ENCODE measurements at regions of chr9 and their contacts with region 1.

Region 1: GRCh38 chr9:130186839-130187522 is 14.8 kb downstream of the NCS1 start:
- DNase-seq: peak; percentile 39 to 75
- H3K4me3 ChIP-seq: no peak overlapping the region
- H3K27ac ChIP-seq: no peak overlapping the region
- H3K4me1 ChIP-seq: peaks cover 0 to 44% (median 35%) of the 10 kb centered on the region in 4 experiments; a peak in 6 of 7 replicates
- H3K27me3 ChIP-seq: no peaks in the 10 kb centered on the region
- CTCF ChIP-seq: no peak
- EP300 ChIP-seq: no peak
- POLR2A ChIP-seq: no peak
- RAD21 ChIP-seq: no peak

Region 2: DNA sequence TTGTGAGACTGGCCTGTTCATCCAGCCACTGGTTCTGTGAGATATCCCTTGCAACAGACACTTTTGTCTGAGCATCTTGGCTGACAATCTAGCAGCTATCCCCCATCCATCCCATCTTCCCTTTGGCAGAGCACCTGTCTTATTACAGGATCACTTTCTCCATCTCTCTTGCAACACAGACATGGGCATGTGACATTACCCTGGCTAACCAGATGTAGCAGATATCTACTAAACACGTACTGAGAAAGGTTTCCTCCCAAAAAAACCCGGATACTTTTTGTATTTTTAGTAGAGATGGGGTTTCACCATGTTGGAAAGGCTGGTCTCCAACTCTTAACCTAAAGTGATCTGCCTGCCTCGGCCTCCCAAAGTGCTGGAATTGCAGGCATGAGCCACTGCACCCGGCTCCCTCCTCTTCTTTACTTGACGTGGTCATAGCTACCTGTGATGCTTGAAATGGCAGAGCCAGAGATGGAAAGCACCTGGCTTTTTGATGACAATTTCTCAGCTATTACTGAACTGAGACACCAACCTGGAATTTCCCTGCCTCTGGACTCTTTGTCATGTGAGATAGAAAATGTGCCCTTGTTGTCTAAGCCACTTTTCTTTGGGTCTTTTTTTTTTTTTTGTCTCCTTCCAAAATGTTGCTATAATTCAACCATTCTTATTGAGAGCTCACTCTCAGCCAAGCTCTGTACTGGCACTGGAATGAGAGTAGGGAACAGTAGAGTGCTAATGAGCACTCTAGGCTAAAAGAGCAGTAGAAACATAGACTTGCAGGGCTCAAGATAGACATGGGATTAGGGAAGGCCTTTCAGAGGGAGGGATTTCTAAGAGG is 176.6 kb before region 1 on chr9:
- CTCF ChIA-PET with region 1: no interaction called
- POLR2A ChIA-PET with region 1: no interaction called
- DNase-seq: no peak
- H3K4me3 ChIP-seq: no peak overlapping the region
- H3K27ac ChIP-seq: no peak overlapping the region
- H3K4me1 ChIP-seq: no peaks in the 10 kb centered on the region
- H3K27me3 ChIP-seq: no peaks in the 10 kb centered on the region
- CTCF ChIP-seq: no peak
- EP300 ChIP-seq: no peak
- POLR2A ChIP-seq: no peak
- RAD21 ChIP-seq: no peak

Region 3: GRCh38 chr9:130167927-130168326 is 19.1 kb before region 1 on chr9:
- CTCF ChIA-PET with region 1: interaction called, 20 read pairs
- POLR2A ChIA-PET with region 1: interaction called, 4 read pairs
- DNase-seq: no peak
- H3K4me3 ChIP-seq: no peak overlapping the region
- H3K27ac ChIP-seq: no peak overlapping the region
- H3K4me1 ChIP-seq: peaks cover 3 to 4% (median 3%) of the 10 kb centered on the region in 4 experiments; a peak in 3 of 7 replicates
- H3K27me3 ChIP-seq: peaks cover 0 to 13% (median 5%) of the 10 kb centered on the region in 4 experiments; a peak in 3 of 7 replicates
- CTCF ChIP-seq: peak in 2 of 3 experiments; percentile 37 to 49; a peak in 3 of 4 replicates
- EP300 ChIP-seq: no peak
- POLR2A ChIP-seq: no peak
- RAD21 ChIP-seq: peak; percentile 37 to 39; a peak in 3 of 4 replicates

Region 4: GRCh38 chr9:130172858-130173665 is 13.9 kb before region 1 on chr9:
- CTCF ChIA-PET with region 1: interaction called, 20 read pairs
- POLR2A ChIA-PET with region 1: interaction called, 4 read pairs
- DNase-seq: peak in 1 of 2 experiments; percentile 64
- H3K4me3 ChIP-seq: peak overlapping the region; percentile 44 to 80 (median 54)
- H3K27ac ChIP-seq: no peak overlapping the region
- H3K4me1 ChIP-seq: peaks cover 4 to 14% (median 10%) of the 10 kb centered on the region in 4 experiments
- H3K27me3 ChIP-seq: peaks cover 0 to 13% (median 5%) of the 10 kb centered on the region in 4 experiments; a peak in 3 of 7 replicates
- CTCF ChIP-seq: peak in 1 of 3 experiments; percentile 18; a peak in 1 of 4 replicates
- EP300 ChIP-seq: no peak
- POLR2A ChIP-seq: no peak
- RAD21 ChIP-seq: no peak

Measured in H1 (cell line).